Activated CD4-positive, alpha-beta memory T cell treated with anti-CD3 and anti-CD28 coated beads for 36 hours (primary cell): ENCODE measurements at regions of chr3 and their contacts with region 1.

Region 1: DNA sequence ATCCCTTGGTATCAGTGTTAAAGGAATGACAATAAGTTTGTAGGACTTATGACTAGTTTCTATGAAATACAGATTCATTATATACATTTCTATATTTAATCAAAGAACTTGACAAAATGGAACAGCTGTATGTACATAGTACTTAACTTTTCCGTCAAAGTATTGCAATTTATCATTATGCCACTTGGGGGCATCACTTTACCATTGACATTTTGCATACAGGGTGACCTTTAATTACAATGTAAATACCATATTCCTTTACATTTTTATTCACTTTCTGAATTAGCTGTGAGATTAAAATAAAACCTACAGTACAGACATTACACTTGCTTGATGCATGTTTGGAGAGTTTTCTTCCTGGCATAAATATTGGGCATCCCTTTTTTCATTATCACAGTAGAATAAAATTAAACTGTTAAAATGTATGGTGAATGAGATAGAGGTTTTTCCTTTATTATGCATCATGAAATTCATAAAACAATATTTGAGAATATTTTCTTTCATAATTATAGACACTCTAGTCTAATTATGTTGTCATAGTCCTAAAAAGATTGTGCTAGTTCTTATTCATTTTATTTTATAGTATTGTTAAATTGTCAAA is 6.9 kb downstream of the NEK11 start:
- DNase-seq: no peak
- H3K4me3 Mint-ChIP-seq: no peak overlapping the region
- H3K27ac Mint-ChIP-seq: no peak overlapping the region
- H3K4me1 Mint-ChIP-seq: no peaks in the 10 kb centered on the region
- H3K27me3 Mint-ChIP-seq: no peaks in the 10 kb centered on the region

Region 2: DNA sequence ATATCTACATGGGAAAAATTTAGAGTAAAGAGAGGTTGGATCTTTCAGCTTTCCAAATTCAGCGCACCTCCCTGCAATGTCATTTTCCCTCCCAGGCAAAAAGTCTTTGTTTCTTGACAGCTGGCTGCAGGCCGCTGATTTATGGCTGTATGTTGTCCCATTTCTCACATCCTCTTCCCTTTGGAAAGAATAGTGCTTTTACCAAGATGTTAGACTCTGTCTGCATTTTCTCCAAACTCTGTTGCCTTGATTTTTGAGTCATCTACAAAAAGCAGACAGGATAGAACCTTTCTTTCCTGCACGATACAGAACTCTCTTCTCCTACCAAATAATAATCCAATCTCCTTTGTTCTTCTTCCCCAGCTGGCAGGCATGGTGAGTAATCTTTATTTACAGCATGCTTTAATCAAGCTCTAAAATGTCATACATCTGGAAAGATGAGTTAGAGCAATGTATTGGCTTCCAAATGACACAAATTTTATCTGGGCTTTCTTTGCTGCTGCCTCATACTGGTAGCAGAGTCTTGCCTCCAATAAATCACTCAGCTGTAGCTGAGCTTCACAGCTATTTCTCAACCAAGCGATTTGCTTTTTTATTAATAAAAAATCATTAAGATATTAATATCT is 388.8 kb before region 1 on chr3:
- CTCF ChIA-PET with region 1: no interaction called
- POLR2A ChIA-PET with region 1: no interaction called
- intact Hi-C with region 1: no loop called
- DNase-seq: no peak
- H3K4me3 Mint-ChIP-seq: no peak overlapping the region
- H3K27ac Mint-ChIP-seq: no peak overlapping the region
- H3K4me1 Mint-ChIP-seq: no peaks in the 10 kb centered on the region
- H3K27me3 Mint-ChIP-seq: peaks cover 3% of the 10 kb centered on the region

Region 3: DNA sequence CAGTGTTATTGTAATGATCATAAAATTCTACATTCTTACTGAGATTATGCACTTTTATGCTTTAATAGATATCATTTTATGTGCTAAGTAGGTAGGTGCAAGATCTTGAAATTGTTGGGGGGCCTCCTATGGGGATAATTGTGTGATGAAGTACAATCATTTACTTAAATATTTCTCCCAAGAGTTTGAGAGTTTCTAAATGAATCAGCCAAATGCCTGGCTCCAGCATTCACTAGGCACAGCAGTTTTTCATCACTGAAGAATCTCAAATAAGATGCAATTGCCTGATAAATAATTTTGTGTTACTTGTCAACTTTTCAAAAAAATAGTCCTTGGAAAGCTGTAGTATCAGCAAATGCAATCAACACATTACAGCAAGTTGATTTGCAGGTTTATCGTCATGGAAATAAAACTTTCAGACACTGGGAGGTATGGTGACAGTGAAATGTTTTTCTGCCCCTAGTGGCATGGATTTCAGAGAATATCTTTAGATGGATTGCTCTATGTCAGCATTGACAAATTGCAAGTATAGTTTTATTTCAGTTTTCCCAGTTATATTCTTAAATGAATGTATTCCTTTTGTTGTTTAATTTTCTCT is 160.2 kb after region 1 on chr3:
- CTCF ChIA-PET with region 1: no interaction called
- POLR2A ChIA-PET with region 1: no interaction called
- intact Hi-C with region 1: loop called (anchors 10 kb)
- DNase-seq: no peak
- H3K4me3 Mint-ChIP-seq: no peak overlapping the region
- H3K27ac Mint-ChIP-seq: no peak overlapping the region
- H3K4me1 Mint-ChIP-seq: no peaks in the 10 kb centered on the region
- H3K27me3 Mint-ChIP-seq: no peaks in the 10 kb centered on the region

Region 4: GRCh38 chr3:131794766-131795388 is 761.3 kb after region 1 on chr3:
- CTCF ChIA-PET with region 1: interaction called, 8 read pairs
- POLR2A ChIA-PET with region 1: no interaction called
- intact Hi-C with region 1: loop called (anchors 10 kb)
- DNase-seq: peak; percentile 16
- H3K4me3 Mint-ChIP-seq: no peak overlapping the region
- H3K27ac Mint-ChIP-seq: no peak overlapping the region
- H3K4me1 Mint-ChIP-seq: peaks cover 8% of the 10 kb centered on the region
- H3K27me3 Mint-ChIP-seq: peaks cover 13% of the 10 kb centered on the region

Region 5: GRCh38 chr3:132029182-132029902 is 995.8 kb after region 1 on chr3:
- CTCF ChIA-PET with region 1: interaction called, 21 read pairs
- POLR2A ChIA-PET with region 1: no interaction called
- intact Hi-C with region 1: loop called (anchors 1 kb)
- DNase-seq: peak; percentile 77
- H3K4me3 Mint-ChIP-seq: no peak overlapping the region
- H3K27ac Mint-ChIP-seq: no peak overlapping the region
- H3K4me1 Mint-ChIP-seq: peaks cover 5% of the 10 kb centered on the region
- H3K27me3 Mint-ChIP-seq: peaks cover 46% of the 10 kb centered on the region

Region 6: GRCh38 chr3:132180337-132180791 is 1146.8 kb after region 1 on chr3:
- CTCF ChIA-PET with region 1: interaction called, 4 read pairs
- POLR2A ChIA-PET with region 1: no interaction called
- intact Hi-C with region 1: loop called (anchors 10 kb)
- DNase-seq: no peak
- H3K4me3 Mint-ChIP-seq: no peak overlapping the region
- H3K27ac Mint-ChIP-seq: no peak overlapping the region
- H3K4me1 Mint-ChIP-seq: peaks cover 6% of the 10 kb centered on the region
- H3K27me3 Mint-ChIP-seq: peaks cover 3% of the 10 kb centered on the region